ENCODE measurements at regions of chr17 and their contacts with region 1.

Region 1: GRCh38 chr17:12342609-12343435 is 322.1 kb downstream of the MAP2K4 start:
- DNase-seq: peak; percentile 54
- H3K4me3 ChIP-seq: no peak overlapping the region
- H3K27ac ChIP-seq: no peak overlapping the region
- H3K4me1 ChIP-seq: no peaks in the 10 kb centered on the region
- H3K27me3 ChIP-seq: no peaks in the 10 kb centered on the region
- CTCF ChIP-seq: peak; percentile 18 to 50 (median 33)
- EP300 ChIP-seq: no peak
- POLR2A ChIP-seq: no peak

Region 2: DNA sequence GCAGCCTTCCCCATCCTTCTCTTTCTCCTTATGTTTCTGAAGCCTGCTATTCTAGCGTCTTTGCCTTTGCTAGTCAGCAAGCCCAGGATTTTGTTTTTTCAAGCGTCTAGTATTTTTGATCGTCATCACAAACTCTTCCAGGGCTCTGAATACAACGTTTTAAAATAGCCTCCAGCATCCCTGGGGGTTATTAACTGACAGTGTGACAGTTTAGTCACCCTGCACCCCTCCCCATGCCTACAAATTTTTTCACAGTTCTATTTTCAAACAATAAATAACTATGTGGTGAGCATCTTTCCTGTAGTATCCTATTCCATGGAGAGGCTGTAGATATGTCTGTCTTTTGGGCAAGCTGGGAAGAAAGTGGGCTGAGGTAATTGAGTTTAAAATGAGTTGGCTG is 41.3 kb before region 1 on chr17:
- in situ Hi-C with region 1: no loop called
- intact Hi-C with region 1: loop called (anchors 5 kb)
- DNase-seq: no peak
- H3K4me3 ChIP-seq: no peak overlapping the region
- H3K27ac ChIP-seq: no peak overlapping the region
- H3K4me1 ChIP-seq: peaks cover 0 to 3% (median 0%) of the 10 kb centered on the region in 4 donors
- H3K27me3 ChIP-seq: no peaks in the 10 kb centered on the region
- CTCF ChIP-seq: no peak
- EP300 ChIP-seq: no peak
- POLR2A ChIP-seq: no peak

Region 3: GRCh38 chr17:12431188-12431587 is 88.4 kb after region 1 on chr17:
- in situ Hi-C with region 1: no loop called
- intact Hi-C with region 1: no loop called
- DNase-seq: no peak
- H3K4me3 ChIP-seq: no peak overlapping the region
- H3K27ac ChIP-seq: no peak overlapping the region
- H3K4me1 ChIP-seq: no peaks in the 10 kb centered on the region
- H3K27me3 ChIP-seq: no peaks in the 10 kb centered on the region
- CTCF ChIP-seq: no peak
- EP300 ChIP-seq: no peak
- POLR2A ChIP-seq: no peak